Esophagus muscularis mucosa (tissue), 4 donors: ENCODE measurements at regions of chr17 and their contacts with region 1.

Region 1: DNA sequence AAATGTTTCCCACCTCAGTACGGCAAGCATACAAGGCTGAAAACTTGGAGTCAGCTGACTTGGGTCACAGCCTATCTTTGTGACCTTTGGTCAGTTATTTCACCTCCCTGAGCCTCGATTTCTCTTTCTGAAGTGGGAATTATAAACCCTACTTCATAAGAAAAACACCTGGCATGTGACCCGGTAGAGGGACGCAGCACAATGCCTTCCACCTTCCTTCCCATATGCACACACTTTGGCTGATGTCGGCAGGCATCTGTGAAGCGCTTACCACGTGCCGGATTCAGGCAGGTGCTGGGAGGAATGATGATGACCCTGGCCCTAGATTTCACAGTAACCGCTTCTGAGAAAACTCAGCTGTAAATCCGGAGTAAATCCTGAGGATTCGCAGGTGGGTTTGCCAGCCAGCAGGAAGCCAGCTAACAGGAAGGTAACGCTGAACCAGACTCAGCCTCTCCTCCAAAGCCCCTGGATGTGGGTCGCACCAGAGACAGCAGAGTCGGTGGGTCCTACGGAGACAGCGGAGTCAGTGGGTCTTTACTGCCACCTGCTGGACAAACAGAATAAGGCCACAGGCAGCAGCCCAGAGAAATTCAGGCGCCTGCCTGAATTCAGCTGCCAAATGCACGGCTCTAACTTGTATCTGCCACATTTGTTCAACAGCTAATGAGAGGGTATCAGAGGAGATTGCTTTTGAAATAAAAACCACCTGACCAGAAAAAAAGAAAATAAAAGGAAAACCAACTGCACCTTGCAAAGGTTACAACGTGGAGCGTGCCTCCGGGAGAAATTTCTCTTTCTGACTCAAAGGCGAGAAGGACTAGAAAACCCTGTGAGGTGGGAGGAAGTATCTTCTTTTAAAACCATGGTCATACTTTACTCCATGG is 16.6 kb downstream of the COPRS start:
- DNase-seq: no peak
- H3K4me3 ChIP-seq: peak overlapping the region; percentile 18 to 39 (median 25)
- H3K27ac ChIP-seq: peak overlapping the region; percentile 62 to 82 (median 72)
- H3K4me1 ChIP-seq: peaks cover 20 to 55% (median 38%) of the 10 kb centered on the region in 4 donors
- H3K27me3 ChIP-seq: no peaks in the 10 kb centered on the region
- CTCF ChIP-seq: peak; percentile 96 to 97 (median 97)
- EP300 ChIP-seq: no peak
- POLR2A ChIP-seq: no peak

Region 2: GRCh38 chr17:31472137-31472536 is 370.3 kb before region 1 on chr17:
- intact Hi-C with region 1: no loop called
- DNase-seq: no peak
- H3K4me3 ChIP-seq: no peak overlapping the region
- H3K27ac ChIP-seq: no peak overlapping the region
- H3K4me1 ChIP-seq: peaks cover 0 to 8% (median 0%) of the 10 kb centered on the region in 4 donors
- H3K27me3 ChIP-seq: peaks cover 0 to 23% (median 0%) of the 10 kb centered on the region in 4 donors
- CTCF ChIP-seq: no peak
- EP300 ChIP-seq: no peak
- POLR2A ChIP-seq: no peak

Region 3: GRCh38 chr17:31558748-31559644 is 283.4 kb before region 1 on chr17:
- intact Hi-C with region 1: loop called (anchors 1 kb)
- DNase-seq: no peak
- H3K4me3 ChIP-seq: peak overlapping the region; percentile 65 to 86 (median 68)
- H3K27ac ChIP-seq: peak overlapping the region; percentile 90 to 95 (median 92)
- H3K4me1 ChIP-seq: peaks cover 27 to 54% (median 52%) of the 10 kb centered on the region in 4 donors
- H3K27me3 ChIP-seq: no peaks in the 10 kb centered on the region
- CTCF ChIP-seq: peak; percentile 96 to 98 (median 96)
- EP300 ChIP-seq: no peak
- POLR2A ChIP-seq: no peak